ENCODE measurements at regions of chr6 and their contacts with region 1.

Region 1: GRCh38 chr6:144528743-144529425 is 243.7 kb downstream of the UTRN start:
- DNase-seq: no peak
- ATAC-seq: no peak
- H3K4me3 ChIP-seq: no peak overlapping the region
- H3K4me3 Mint-ChIP-seq: no peak overlapping the region
- H3K27ac ChIP-seq: no peak overlapping the region
- H3K27ac Mint-ChIP-seq: no peak overlapping the region
- H3K4me1 ChIP-seq: no peaks in the 10 kb centered on the region
- H3K4me1 Mint-ChIP-seq: no peaks in the 10 kb centered on the region
- H3K27me3 ChIP-seq: no peaks in the 10 kb centered on the region
- H3K27me3 Mint-ChIP-seq: no peaks in the 10 kb centered on the region
- CTCF ChIP-seq: no peak

Region 2: GRCh38 chr6:144559865-144560593 is 31.1 kb after region 1 on chr6:
- CTCF ChIA-PET with region 1: no interaction called
- POLR2A ChIA-PET with region 1: no interaction called
- intact Hi-C with region 1: loop called (anchors 5 kb)
- DNase-seq: no peak
- ATAC-seq: no peak
- H3K4me3 ChIP-seq: no peak overlapping the region
- H3K4me3 Mint-ChIP-seq: no peak overlapping the region
- H3K27ac ChIP-seq: no peak overlapping the region
- H3K27ac Mint-ChIP-seq: no peak overlapping the region
- H3K4me1 ChIP-seq: no peaks in the 10 kb centered on the region
- H3K4me1 Mint-ChIP-seq: no peaks in the 10 kb centered on the region
- H3K27me3 ChIP-seq: no peaks in the 10 kb centered on the region
- H3K27me3 Mint-ChIP-seq: no peaks in the 10 kb centered on the region
- CTCF ChIP-seq: no peak